Activated B cell treated with CpG ODN at 0.5 μM for 24 hours (primary cell): ENCODE measurements at regions of chr17 and their contacts with region 1.

Region 1: GRCh38 chr17:7351665-7352501 is at the start of gene KCTD11:
- DNase-seq: peak; percentile 78
- ATAC-seq: peak; percentile 63
- H3K4me3 Mint-ChIP-seq: peak within 1 kb of the TSS; percentile 87
- H3K27ac Mint-ChIP-seq: peak within 1 kb of the TSS; percentile 87
- H3K4me1 Mint-ChIP-seq: peaks cover 42% of the 10 kb centered on the region
- H3K27me3 Mint-ChIP-seq: no peaks in the 10 kb centered on the region
- CTCF ChIP-seq: no peak
- total RNA-seq, gene KCTD11: 7.2 and 7.8 TPM in 2 replicates

Region 2: DNA sequence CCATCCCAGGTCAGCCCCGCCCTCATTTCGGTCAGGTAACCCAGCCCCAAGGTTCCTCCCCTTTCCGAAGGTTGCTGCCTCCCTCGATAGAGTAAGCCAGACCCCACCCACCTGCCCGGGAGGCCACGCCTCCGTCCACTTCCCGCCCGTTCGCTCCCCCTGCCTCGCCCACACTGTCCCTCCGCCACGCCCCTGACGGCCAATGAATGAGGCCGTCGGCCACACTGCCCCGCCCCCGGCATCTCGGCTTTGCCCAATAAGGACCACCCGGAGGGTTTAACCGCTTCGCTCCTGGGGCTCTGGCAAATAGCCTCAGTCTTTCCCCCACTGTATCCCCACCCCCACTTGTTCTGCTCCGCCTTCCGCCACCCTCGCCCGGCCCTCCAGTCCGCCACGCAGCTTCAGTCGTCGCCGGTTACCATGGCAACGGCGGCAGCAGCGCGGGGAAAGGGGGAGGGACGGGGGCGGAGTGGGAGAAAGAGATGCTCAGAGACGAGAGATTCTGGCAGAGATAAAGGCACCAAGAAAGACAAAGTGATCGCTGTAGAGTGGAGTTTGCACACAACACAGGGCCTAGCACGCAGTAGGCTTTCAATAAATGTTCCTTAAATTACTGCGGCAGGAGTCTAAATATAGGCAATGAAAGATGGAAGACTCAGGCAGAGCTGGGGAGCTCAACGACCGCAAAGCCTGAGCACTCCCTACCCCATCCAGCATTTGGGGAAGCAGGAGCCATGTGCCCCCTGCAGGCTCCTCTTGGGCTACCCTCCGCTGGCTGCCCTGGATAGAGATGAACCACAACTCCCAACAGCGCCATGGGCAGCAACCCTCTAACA is 137.4 kb before region 1 on chr17:
- CTCF ChIA-PET with region 1: no interaction called
- POLR2A ChIA-PET with region 1: no interaction called
- intact Hi-C with region 1: loop called (anchors 5 kb)
- DNase-seq: peak; percentile 98
- ATAC-seq: peak; percentile 86
- H3K4me3 Mint-ChIP-seq: peak overlapping the region; percentile 88
- H3K27ac Mint-ChIP-seq: peak overlapping the region; percentile 94
- H3K4me1 Mint-ChIP-seq: peaks cover 53% of the 10 kb centered on the region
- H3K27me3 Mint-ChIP-seq: no peaks in the 10 kb centered on the region
- CTCF ChIP-seq: no peak

Region 3: DNA sequence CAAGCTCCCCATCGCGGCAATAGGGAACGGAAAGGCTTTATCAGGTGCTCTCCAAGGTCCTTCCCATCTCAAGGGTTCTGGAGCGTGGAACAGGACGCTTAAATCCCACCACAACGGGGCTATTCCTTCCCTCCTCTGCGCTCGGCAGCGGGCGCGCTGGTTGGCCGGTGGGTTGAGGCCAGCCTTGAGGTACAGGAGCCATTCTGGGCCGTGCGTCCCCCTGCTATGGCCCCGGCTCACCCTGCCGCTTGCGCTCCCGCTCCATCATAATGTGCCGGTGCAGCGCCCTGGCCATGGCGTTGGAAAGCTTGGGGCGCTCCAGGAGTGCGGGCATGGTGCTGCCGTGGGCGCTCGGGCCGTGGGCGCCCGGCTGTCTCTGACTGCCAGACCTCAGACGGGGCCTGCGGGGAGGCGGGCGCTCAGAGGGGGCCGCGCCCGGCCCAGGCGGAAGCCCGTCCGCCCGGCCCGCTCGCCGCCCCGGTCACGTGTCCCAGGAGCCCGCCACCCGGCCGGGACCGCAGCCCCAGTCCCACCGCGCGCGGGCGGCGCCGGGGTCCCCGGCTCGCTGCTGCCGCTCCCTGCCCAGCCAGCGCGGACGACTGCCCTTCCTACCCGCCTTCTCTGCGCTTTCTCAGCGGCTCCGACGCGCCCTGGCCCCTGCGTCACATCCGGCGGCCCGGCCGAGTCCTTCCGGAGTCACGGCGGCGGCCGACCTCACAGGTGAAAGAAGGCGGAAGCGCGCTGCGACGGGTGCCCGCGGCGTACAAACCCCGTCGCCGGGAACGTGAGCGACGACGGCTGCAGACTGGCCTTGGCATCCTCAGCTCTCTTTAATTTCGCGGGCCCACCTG is 36.9 kb before region 1 on chr17 and contains the start of gene GPS2:
- CTCF ChIA-PET with region 1: interaction called, 4 read pairs
- POLR2A ChIA-PET with region 1: interaction called, 13 read pairs
- intact Hi-C with region 1: no loop called
- DNase-seq: peak; percentile 95
- ATAC-seq: peak; percentile 82
- H3K4me3 Mint-ChIP-seq: peak within 1 kb of the TSS; percentile 89
- H3K27ac Mint-ChIP-seq: peak within 1 kb of the TSS; percentile 87
- H3K4me1 Mint-ChIP-seq: peaks cover 54% of the 10 kb centered on the region
- H3K27me3 Mint-ChIP-seq: no peaks in the 10 kb centered on the region
- CTCF ChIP-seq: no peak
- total RNA-seq, gene GPS2: 105 and 115 TPM in 2 replicates

Region 4: DNA sequence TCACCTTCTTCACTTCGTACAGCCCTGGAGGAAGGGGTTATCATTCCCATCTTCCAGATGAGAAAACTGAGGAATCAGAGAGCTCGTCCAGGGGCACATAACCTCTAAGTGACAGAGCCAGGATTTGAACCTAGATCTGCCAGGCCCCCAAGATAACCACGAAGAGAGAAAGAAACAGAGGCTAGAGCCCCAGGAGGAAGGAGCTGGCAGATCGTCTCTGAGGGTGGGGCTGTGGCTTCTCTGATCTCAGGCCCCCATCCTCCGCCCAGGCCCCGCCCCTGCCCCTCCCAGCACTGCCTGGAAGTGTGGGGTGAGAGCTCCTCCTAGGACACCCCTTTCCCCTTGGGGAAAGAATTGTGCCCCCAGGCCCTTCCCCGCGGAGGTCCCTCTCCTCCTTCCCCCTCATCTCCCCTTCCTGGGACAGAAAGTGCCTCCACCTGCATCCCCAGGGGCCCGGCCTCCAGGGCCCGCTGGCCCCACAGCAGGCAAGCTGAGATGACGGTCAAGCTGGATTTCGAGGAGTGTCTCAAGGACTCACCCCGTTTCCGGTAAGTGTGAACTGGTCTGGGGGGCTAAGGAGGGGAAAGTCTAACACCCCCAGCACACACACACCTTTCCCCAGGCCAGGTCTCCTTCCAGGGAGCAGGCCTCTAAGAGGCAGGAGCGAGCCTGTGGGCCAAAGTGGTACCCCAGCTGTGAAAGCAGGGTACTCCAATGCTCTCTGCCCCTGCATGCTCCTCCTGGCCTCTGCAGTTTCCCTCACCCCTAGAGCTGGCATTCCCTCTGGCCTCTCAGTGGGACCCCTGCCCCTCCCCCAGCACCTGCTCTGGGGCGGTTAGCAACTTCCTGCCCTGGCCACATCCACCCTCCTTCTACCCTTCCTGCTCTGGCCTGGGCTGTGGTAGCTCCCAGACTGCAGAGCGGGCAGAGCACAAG is 15.4 kb before region 1 on chr17 and contains the start of gene ACAP1:
- CTCF ChIA-PET with region 1: interaction called, 21 read pairs
- POLR2A ChIA-PET with region 1: interaction called, 48 read pairs
- intact Hi-C with region 1: loop called (anchors 1 kb)
- DNase-seq: peak; percentile 67
- ATAC-seq: peak; percentile 96
- H3K4me3 Mint-ChIP-seq: peak within 1 kb of the TSS; percentile 85
- H3K27ac Mint-ChIP-seq: peak within 1 kb of the TSS; percentile 98
- H3K4me1 Mint-ChIP-seq: peaks cover 49% of the 10 kb centered on the region
- H3K27me3 Mint-ChIP-seq: no peaks in the 10 kb centered on the region
- CTCF ChIP-seq: no peak
- total RNA-seq, gene ACAP1: 298 and 328 TPM in 2 replicates

Region 5: GRCh38 chr17:7403977-7404736 is 52.3 kb after region 1 on chr17 and contains the start of gene TMEM256:
- CTCF ChIA-PET with region 1: interaction called, 3 read pairs
- POLR2A ChIA-PET with region 1: interaction called, 17 read pairs
- intact Hi-C with region 1: loop called (anchors 1 kb)
- DNase-seq: peak; percentile 82
- ATAC-seq: peak; percentile 89
- H3K4me3 Mint-ChIP-seq: peak within 1 kb of the TSS; percentile 97
- H3K27ac Mint-ChIP-seq: peak within 1 kb of the TSS; percentile 94
- H3K4me1 Mint-ChIP-seq: peaks cover 16% of the 10 kb centered on the region
- H3K27me3 Mint-ChIP-seq: peaks cover 12% of the 10 kb centered on the region
- CTCF ChIP-seq: no peak
- total RNA-seq, gene TMEM256: 98.2 and 117 TPM in 2 replicates

Region 6: DNA sequence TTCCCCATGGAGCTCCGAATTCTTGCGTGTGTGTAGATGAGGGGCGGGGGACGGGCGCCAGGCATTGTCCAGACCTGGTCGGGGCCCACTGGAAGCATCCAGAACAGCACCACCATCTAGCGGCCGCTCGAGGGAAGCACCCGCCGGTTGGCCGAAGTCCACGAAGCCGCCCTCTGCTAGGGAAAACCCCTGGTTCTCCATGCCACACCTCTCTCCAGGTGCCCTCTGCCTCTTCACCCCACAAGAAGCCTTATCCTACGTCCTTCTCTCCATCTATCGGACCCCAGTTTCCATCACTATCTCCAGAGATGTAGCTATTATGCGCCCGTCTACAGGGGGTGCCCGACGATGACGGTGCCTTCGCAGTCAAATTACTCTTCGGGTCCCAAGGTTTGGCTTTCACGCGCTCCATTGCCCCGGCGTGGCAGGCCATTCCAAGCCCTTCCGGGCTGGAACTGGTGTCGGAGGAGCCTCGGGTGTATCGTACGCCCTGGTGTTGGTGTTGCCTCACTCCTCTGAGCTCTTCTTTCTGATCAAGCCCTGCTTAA is 209.2 kb after region 1 on chr17:
- CTCF ChIA-PET with region 1: interaction called, 30 read pairs
- POLR2A ChIA-PET with region 1: interaction called, 10 read pairs
- intact Hi-C with region 1: loop called (anchors 1 kb)
- DNase-seq: peak; percentile 76
- ATAC-seq: peak; percentile 68
- H3K4me3 Mint-ChIP-seq: peak overlapping the region; percentile 92
- H3K27ac Mint-ChIP-seq: peak overlapping the region; percentile 96
- H3K4me1 Mint-ChIP-seq: peaks cover 60% of the 10 kb centered on the region
- H3K27me3 Mint-ChIP-seq: no peaks in the 10 kb centered on the region
- CTCF ChIP-seq: no peak